ENCODE measurements at regions of chr1 and their contacts with region 1.

Region 1: DNA sequence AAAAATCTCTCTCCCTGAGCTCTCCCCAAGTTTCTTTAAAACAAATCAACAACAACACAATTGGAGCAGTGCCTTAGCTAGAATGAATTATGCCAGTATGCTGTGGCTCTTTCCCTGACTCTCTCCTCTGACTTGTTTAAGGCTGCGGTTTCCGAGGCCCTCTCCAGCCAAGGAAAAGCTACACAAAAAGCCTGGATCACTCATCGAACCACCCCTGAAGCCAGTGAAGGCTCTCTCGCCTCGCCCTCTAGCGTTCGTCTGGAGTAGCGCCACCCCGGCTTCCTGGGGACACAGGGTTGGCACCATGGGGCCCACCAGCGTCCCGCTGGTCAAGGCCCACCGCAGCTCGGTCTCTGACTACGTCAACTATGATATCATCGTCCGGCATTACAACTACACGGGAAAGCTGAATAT is 1.9 kb downstream of the S1PR1 start:
- DNase-seq: peak; percentile 95
- ATAC-seq: peak; percentile 42
- H3K4me3 Mint-ChIP-seq: peak overlapping the region; percentile 86
- H3K27ac Mint-ChIP-seq: peak overlapping the region; percentile 98
- H3K4me1 Mint-ChIP-seq: peaks cover 42% of the 10 kb centered on the region
- H3K27me3 Mint-ChIP-seq: no peaks in the 10 kb centered on the region
- CTCF ChIP-seq: peak; percentile 98

Region 2: DNA sequence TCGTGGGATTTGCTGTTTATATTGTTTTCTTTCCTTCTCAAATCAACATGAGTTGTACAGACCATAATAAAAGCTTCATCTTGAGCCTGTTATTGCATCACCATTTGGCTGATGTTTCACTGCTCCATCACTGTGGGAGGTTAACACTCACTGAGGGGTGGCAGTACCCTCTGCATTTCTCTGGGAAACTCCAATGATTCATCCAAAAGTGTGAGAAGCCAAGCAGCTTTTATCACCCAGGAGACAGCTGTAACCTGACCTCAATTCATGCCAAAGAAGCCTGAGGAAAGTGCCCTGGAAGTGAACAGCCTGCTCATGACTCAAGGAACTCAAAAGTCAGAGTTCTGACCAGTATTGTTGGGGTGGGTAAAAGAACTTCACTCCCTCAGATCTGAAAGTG is 616.7 kb before region 1 on chr1:
- CTCF ChIA-PET with region 1: no interaction called
- POLR2A ChIA-PET with region 1: no interaction called
- intact Hi-C with region 1: no loop called
- DNase-seq: peak; percentile 14
- ATAC-seq: peak; percentile 84
- H3K4me3 Mint-ChIP-seq: no peak overlapping the region
- H3K27ac Mint-ChIP-seq: no peak overlapping the region
- H3K4me1 Mint-ChIP-seq: peaks cover 10% of the 10 kb centered on the region
- H3K27me3 Mint-ChIP-seq: no peaks in the 10 kb centered on the region
- CTCF ChIP-seq: no peak

Region 3: DNA sequence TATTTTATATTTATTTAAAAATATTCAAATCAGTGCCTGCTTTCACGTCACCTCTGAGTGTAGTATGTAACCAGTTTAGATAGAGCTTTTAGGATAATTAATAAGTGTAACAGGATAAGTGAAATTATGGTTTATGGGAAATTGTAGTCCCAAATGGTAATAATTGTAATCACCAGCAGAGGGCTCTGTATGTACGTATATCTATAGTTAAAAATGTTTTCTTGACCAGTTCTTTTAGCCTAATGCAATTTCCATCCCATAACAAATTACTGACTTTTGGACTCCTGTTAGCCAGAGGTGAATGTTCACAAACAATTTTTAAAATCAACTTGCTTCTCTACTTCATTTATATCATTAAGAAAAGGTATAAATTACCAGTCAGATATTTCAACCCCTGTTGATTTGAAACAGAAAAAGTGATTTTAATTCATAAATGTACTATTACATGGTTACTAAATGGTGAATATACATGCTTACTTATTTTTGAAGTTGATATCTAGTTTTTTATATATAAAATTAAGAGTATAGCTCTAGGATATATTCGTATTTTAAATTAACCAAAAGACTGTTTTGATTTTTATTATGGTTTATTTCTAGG is 317.5 kb before region 1 on chr1:
- CTCF ChIA-PET with region 1: interaction called, 28 read pairs
- POLR2A ChIA-PET with region 1: interaction called, 5 read pairs
- intact Hi-C with region 1: loop called (anchors 5 kb)
- DNase-seq: no peak
- ATAC-seq: no peak
- H3K4me3 Mint-ChIP-seq: no peak overlapping the region
- H3K27ac Mint-ChIP-seq: peak overlapping the region; percentile 64
- H3K4me1 Mint-ChIP-seq: peaks cover 53% of the 10 kb centered on the region
- H3K27me3 Mint-ChIP-seq: no peaks in the 10 kb centered on the region
- CTCF ChIP-seq: peak; percentile 93

Region 4: GRCh38 chr1:100941098-100941527 is 297.6 kb before region 1 on chr1:
- CTCF ChIA-PET with region 1: no interaction called
- POLR2A ChIA-PET with region 1: no interaction called
- intact Hi-C with region 1: loop called (anchors 5 kb)
- DNase-seq: peak; percentile 40
- ATAC-seq: peak; percentile 78
- H3K4me3 Mint-ChIP-seq: peak overlapping the region; percentile 71
- H3K27ac Mint-ChIP-seq: peak overlapping the region; percentile 93
- H3K4me1 Mint-ChIP-seq: peaks cover 37% of the 10 kb centered on the region
- H3K27me3 Mint-ChIP-seq: peaks cover 2% of the 10 kb centered on the region
- CTCF ChIP-seq: no peak

Region 5: GRCh38 chr1:101122452-101123166 is 116.1 kb before region 1 on chr1:
- CTCF ChIA-PET with region 1: interaction called, 8 read pairs
- POLR2A ChIA-PET with region 1: interaction called, 8 read pairs
- intact Hi-C with region 1: loop called (anchors 5 kb)
- DNase-seq: peak; percentile 65
- ATAC-seq: peak; percentile 77
- H3K4me3 Mint-ChIP-seq: peak overlapping the region; percentile 42
- H3K27ac Mint-ChIP-seq: peak overlapping the region; percentile 84
- H3K4me1 Mint-ChIP-seq: peaks cover 51% of the 10 kb centered on the region
- H3K27me3 Mint-ChIP-seq: no peaks in the 10 kb centered on the region
- CTCF ChIP-seq: no peak

Region 6: DNA sequence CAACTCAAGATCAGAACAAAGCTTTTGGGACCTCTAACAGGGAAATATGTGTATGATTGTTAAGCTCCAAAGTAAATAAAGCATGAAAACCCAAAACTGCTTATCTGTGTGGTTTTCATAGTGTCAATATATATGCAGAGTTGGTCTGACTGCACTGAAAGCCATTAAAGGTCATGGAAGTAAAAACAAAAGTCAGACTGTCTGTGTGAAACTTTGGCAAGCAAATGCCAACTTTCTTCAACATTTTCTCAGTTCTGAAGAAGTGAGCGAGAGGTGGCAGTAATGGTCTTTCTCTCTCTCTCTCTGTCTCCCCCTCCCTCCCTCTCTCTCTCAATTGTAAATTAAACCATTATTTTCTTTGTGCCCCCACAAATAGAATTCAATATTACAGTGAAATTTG is 101.9 kb before region 1 on chr1:
- CTCF ChIA-PET with region 1: interaction called, 70 read pairs
- POLR2A ChIA-PET with region 1: interaction called, 54 read pairs
- intact Hi-C with region 1: loop called (anchors 1 kb)
- DNase-seq: peak; percentile 59
- ATAC-seq: peak; percentile 85
- H3K4me3 Mint-ChIP-seq: peak overlapping the region; percentile 33
- H3K27ac Mint-ChIP-seq: peak overlapping the region; percentile 80
- H3K4me1 Mint-ChIP-seq: peaks cover 64% of the 10 kb centered on the region
- H3K27me3 Mint-ChIP-seq: no peaks in the 10 kb centered on the region
- CTCF ChIP-seq: peak; percentile 56

Region 7: GRCh38 chr1:101190441-101190840 is 48.2 kb before region 1 on chr1:
- CTCF ChIA-PET with region 1: interaction called, 5 read pairs
- POLR2A ChIA-PET with region 1: interaction called, 13 read pairs
- intact Hi-C with region 1: no loop called
- DNase-seq: no peak
- ATAC-seq: no peak
- H3K4me3 Mint-ChIP-seq: no peak overlapping the region
- H3K27ac Mint-ChIP-seq: no peak overlapping the region
- H3K4me1 Mint-ChIP-seq: peaks cover 26% of the 10 kb centered on the region
- H3K27me3 Mint-ChIP-seq: no peaks in the 10 kb centered on the region
- CTCF ChIP-seq: no peak

Region 8: DNA sequence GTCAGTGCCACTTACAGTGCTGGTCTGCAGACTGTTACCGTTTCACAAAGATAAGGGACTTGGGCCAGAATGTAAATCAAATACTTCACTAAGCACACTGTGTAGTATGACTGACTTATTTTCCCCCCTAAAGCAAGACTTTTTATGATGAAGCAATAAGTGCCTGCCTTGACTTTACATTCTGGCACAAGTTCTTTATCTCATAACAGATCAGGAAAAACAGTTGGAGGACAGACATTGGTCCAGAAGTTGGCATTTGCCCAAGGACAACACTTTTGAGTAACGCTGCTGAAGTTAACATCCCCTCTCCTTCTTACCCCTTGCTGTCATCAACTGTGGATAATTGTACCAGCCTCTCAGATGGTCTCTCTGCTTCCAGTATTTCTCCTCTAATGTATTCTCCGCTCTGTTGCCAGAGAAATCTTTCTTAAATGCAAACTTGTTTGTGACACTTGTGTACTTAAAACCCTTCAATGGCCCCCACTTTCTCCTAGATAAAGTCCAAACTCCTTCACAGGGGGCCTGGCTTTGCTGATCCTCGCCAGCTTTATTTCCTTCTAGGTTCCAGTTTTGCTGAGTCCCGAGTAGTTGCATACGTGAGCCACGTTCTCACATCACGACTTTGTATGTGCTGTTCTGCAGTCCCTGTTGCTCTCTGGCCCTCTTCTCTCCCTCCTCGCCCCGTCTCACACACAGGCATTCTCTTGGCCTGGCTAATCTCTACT is 43.8 kb after region 1 on chr1:
- CTCF ChIA-PET with region 1: interaction called, 301 read pairs
- POLR2A ChIA-PET with region 1: interaction called, 39 read pairs
- intact Hi-C with region 1: no loop called
- DNase-seq: no peak
- ATAC-seq: no peak
- H3K4me3 Mint-ChIP-seq: no peak overlapping the region
- H3K27ac Mint-ChIP-seq: peak overlapping the region; percentile 10
- H3K4me1 Mint-ChIP-seq: peaks cover 90% of the 10 kb centered on the region
- H3K27me3 Mint-ChIP-seq: no peaks in the 10 kb centered on the region
- CTCF ChIP-seq: no peak